ENCODE measurements at regions of chr1 and their contacts with region 1.

Region 1: GRCh38 chr1:156767101-156767878 is at the start of gene PRCC:
- DNase-seq: peak; percentile 100
- H3K4me3 ChIP-seq: peak within 1 kb of the TSS; percentile 75 to 98 (median 89)
- H3K27ac ChIP-seq: peak within 1 kb of the TSS; percentile 99
- H3K4me1 ChIP-seq: peaks cover 15 to 34% (median 22%) of the 10 kb centered on the region in 4 experiments
- H3K27me3 ChIP-seq: no peaks in the 10 kb centered on the region

Region 2: DNA sequence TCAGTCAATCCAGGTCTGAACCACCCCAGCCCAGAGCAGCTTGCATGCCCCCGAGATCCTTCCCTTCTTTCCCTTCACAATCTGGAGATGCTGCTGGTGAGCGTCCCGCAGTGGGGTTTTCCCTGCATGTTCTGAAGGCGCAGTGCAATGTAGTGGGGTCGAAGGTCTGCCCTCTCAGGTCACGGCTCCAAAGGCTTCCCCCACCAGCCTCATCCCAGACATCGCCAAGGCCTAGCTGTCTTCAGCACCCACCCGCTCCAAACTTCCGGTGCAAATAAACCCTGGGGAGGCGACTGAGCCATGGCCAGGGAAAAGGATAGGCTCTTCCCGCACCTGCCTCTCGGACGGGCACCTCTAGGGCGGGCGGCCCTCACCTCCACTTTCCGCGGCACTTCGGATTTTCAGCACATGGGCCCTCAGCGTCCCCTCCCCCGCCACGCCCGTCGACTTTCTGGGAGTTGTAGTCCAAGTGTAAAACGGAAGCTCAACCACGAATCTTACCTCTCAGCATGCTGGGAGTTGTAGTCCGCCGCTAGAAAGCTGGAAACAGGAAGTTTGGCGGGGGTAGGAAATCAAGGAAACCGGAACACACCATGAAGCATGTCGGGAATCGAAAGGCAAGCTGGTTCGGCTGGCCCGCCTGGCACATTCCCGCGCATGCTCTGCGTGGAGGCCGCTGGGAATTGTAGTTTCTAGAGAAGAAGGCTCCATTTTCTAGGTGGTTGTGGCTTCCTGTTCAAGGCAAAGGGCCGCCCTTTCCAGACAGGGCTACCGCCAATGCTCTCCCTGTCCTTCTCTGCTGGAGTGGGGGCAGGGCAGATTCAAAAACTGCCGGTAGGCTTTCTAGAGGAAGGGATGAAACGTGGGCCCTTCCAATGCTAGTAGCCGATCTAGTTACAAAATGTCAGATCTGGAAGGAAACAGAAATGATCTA is 26.3 kb before region 1 on chr1 and contains the start of gene MRPL24:
- CTCF ChIA-PET with region 1: interaction called, 13 read pairs
- POLR2A ChIA-PET with region 1: interaction called, 3 read pairs
- DNase-seq: peak; percentile 99 to 100 (median 100)
- H3K4me3 ChIP-seq: peak within 1 kb of the TSS; percentile 63 to 91 (median 83)
- H3K27ac ChIP-seq: peak within 1 kb of the TSS; percentile 52 to 83
- H3K4me1 ChIP-seq: peaks cover 17 to 49% (median 41%) of the 10 kb centered on the region in 4 experiments
- H3K27me3 ChIP-seq: no peaks in the 10 kb centered on the region

Region 3: DNA sequence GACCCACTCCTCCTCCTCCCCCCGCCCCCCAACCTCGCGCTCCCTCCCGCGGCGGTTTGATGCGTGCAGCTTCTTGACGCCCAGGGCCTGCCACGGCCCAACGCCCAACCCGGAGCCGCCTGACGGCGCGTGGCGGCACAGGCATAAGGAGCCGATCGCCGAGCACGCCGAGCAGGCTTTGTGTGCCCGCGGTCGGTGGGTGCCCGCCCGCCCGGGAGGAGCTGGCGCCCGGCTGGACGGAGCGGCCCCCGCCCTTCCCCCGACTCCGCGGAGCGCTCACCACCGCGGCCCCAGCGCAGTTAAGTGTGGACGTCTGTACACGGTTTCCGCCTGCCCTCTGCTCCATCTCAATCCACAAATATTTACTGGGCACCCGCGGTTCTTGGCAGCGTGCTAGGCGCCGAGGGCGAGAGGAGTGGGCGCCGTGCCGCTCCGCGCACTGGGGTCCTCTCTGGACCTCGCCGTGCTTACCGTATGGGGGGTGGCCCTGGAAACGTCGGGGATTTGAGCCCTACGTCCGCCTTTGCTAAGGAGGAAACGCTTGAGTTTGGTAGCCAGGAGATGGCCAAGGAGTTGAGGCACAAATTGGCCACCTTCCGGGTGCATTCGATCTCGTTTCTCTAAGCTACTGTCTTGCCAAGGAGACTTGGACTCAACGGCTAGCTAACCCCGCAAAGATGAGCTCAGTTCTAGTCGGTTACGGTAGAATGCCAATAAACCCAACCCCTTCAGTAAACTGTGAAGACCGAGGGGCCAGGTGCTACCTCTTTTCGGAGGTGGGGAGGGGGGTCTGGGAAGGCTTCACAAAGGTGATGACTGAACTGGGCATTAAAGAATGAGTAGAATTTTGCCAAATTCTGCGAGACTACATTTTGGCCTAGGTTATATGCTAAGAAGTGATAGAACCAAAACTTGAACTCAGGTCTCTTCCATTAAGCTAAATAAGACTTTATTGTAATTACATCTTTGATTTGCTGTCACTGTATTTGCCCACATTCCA is 15.2 kb before region 1 on chr1:
- CTCF ChIA-PET with region 1: interaction called, 5 read pairs
- POLR2A ChIA-PET with region 1: interaction called, 15 read pairs
- DNase-seq: peak; percentile 96 to 98 (median 98)
- H3K4me3 ChIP-seq: peak overlapping the region; percentile 72 to 100 (median 97)
- H3K27ac ChIP-seq: peak overlapping the region; percentile 76 to 91
- H3K4me1 ChIP-seq: peaks cover 26 to 55% (median 50%) of the 10 kb centered on the region in 4 experiments
- H3K27me3 ChIP-seq: no peaks in the 10 kb centered on the region

Region 4: GRCh38 chr1:156781585-156782186 is 14.4 kb after region 1 on chr1:
- CTCF ChIA-PET with region 1: interaction called, 17 read pairs
- POLR2A ChIA-PET with region 1: interaction called, 3 read pairs
- DNase-seq: no peak
- H3K4me3 ChIP-seq: no peak overlapping the region
- H3K27ac ChIP-seq: no peak overlapping the region
- H3K4me1 ChIP-seq: peaks cover 11 to 34% (median 17%) of the 10 kb centered on the region in 4 experiments
- H3K27me3 ChIP-seq: no peaks in the 10 kb centered on the region